Activated CD8-positive, alpha-beta memory T cell treated with anti-CD3 and anti-CD28 coated beads, Interleukin-2, amount 10 ng/mL, durations not matched to agents 7 days and 5 days (primary cell): ENCODE measurements at regions of chr6 and their contacts with region 1.

Region 1: GRCh38 chr6:12233693-12234571 is 56.2 kb upstream of the EDN1 start:
- DNase-seq: peak; percentile 81
- ATAC-seq: peak; percentile 94
- H3K4me3 Mint-ChIP-seq: peak overlapping the region; percentile 23
- H3K27ac Mint-ChIP-seq: peak overlapping the region; percentile 76
- H3K4me1 Mint-ChIP-seq: peaks cover 37% of the 10 kb centered on the region
- H3K27me3 Mint-ChIP-seq: no peaks in the 10 kb centered on the region

Region 2: DNA sequence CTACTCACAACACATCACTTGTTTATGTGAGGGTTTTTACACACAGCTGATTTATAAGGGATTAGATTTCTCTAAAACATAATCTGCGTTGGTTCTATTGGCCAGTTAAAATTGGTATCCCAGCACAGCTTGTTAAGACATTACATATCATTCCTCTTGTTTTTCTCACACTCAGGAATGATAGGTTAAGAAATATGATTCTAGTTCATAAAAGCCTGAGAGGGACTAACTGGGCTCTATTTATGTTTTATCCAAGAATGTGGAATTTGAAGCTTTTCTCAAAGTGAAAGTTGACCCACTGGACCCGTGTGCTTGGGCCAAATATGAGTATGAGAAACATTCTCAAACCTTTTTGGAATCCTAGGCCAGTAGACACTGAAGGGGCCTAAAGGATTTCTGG is 579.1 kb before region 1 on chr6:
- CTCF ChIA-PET with region 1: interaction called, 12 read pairs
- DNase-seq: no peak
- ATAC-seq: no peak
- H3K4me3 Mint-ChIP-seq: no peak overlapping the region
- H3K27ac Mint-ChIP-seq: no peak overlapping the region
- H3K4me1 Mint-ChIP-seq: peaks cover 15% of the 10 kb centered on the region
- H3K27me3 Mint-ChIP-seq: peaks cover 39% of the 10 kb centered on the region

Region 3: DNA sequence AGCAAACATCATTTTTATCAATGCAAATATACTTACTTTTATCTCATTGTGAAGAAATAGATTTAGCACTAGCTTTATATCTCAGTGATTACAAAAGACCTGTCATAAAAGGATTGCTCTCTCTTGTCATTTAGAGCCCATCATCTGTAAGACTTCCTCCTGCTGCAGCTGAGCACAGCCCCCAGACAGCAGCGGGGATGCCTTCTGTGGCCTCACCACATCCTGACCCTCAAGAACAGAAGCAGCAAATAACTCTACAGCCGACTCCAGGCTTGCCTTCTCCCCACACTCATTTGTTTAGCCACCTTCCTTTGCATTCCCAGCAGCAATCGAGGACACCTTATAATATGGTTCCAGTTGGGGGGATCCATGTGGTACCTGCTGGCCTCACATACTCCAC is 70.8 kb before region 1 on chr6:
- CTCF ChIA-PET with region 1: interaction called, 17 read pairs
- DNase-seq: peak; percentile 91
- ATAC-seq: peak; percentile 99
- H3K4me3 Mint-ChIP-seq: peak overlapping the region; percentile 25
- H3K27ac Mint-ChIP-seq: peak overlapping the region; percentile 81
- H3K4me1 Mint-ChIP-seq: peaks cover 43% of the 10 kb centered on the region
- H3K27me3 Mint-ChIP-seq: no peaks in the 10 kb centered on the region

Region 4: GRCh38 chr6:12289933-12290820 is 56.2 kb after region 1 on chr6 and contains the start of gene EDN1:
- CTCF ChIA-PET with region 1: interaction called, 14 read pairs
- DNase-seq: peak; percentile 66
- ATAC-seq: peak; percentile 88
- H3K4me3 Mint-ChIP-seq: peak within 1 kb of the TSS; percentile 74
- H3K27ac Mint-ChIP-seq: no peak within 1 kb of the TSS
- H3K4me1 Mint-ChIP-seq: peaks cover 14% of the 10 kb centered on the region
- H3K27me3 Mint-ChIP-seq: peaks cover 60% of the 10 kb centered on the region
- total RNA-seq, gene EDN1: not detected